Activated CD8-positive, alpha-beta memory T cell treated with anti-CD3 and anti-CD28 coated beads, Interleukin-2, amount 10 ng/mL, durations not matched to agents 7 days and 5 days (primary cell): ENCODE measurements at regions of chr20 and their contacts with region 1.

Region 1: DNA sequence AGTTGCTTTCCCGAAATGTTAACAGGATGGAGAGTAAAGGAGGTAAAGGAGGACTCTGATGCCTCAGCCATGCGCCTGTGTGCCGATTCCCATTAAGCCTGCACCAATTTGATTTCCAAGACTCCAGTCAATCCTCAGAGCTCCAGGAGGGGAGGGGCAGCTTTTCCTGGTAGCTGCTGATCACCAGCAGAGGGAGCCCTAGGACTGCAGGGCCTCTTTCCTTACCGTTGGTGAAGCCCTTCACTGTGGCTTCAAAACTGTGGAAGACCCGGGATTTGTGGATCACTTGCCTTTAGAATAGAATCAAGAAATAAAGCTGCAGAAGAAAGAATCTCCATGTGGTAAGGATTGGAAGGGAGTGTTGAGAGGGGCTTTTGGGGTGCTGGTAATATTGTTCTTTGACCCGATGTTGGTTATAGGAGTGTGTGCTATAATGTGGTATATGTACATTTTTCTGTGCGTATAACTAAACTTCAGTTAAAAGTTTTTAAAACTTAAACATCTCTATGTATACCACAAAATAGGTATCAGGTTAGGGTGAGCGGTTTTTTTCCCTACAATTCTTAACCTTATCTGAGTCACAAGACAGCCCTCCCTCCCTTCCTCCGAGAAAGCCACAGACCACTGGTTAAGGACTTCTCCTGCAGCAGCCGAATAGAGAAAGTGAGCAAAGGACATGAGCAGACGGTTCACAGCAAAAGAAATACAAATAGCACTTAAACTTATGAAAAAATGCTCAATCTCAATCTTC is 6.9 kb upstream of the OSER1 start:
- DNase-seq: peak; percentile 80
- ATAC-seq: peak; percentile 62
- H3K4me3 Mint-ChIP-seq: peak overlapping the region; percentile 60
- H3K27ac Mint-ChIP-seq: peak overlapping the region; percentile 76
- H3K4me1 Mint-ChIP-seq: peaks cover 40% of the 10 kb centered on the region
- H3K27me3 Mint-ChIP-seq: peaks cover 2% of the 10 kb centered on the region

Region 2: DNA sequence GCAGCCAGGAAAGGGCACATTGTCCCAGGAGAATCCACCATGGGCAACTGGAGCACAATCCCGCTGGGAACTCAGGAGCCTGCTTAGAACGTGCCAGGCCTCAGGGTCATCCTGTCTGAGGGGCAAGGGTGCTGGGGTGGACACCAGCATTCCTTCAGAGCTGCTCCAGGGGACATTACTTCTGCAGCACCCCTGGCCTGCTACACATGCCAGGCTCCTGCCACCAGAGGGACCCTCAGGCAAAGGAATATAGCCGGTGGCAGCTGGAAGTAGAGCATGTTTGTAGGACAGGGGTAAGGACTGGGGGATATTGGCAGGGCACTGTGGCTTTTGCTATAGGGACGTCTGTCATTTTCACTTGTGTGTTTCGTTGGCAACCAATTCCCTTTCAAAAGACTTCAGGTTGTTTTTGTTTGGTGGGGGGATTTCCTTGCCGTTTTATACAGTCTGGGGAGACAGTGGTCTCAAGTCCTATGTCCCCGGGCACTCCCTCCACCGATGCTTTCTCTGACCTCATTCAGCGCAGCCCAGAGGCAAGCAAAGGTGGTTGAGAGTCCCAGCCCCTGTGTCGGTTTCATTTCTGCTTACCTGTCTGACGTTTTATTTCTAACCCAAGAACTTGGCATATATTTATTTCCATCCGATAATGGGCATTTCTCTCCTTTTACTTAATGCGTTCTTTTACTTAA is 161.4 kb before region 1 on chr20:
- CTCF ChIA-PET with region 1: no interaction called
- DNase-seq: peak; percentile 63
- ATAC-seq: peak; percentile 66
- H3K4me3 Mint-ChIP-seq: no peak overlapping the region
- H3K27ac Mint-ChIP-seq: no peak overlapping the region
- H3K4me1 Mint-ChIP-seq: peaks cover 2% of the 10 kb centered on the region
- H3K27me3 Mint-ChIP-seq: peaks cover 59% of the 10 kb centered on the region

Region 3: DNA sequence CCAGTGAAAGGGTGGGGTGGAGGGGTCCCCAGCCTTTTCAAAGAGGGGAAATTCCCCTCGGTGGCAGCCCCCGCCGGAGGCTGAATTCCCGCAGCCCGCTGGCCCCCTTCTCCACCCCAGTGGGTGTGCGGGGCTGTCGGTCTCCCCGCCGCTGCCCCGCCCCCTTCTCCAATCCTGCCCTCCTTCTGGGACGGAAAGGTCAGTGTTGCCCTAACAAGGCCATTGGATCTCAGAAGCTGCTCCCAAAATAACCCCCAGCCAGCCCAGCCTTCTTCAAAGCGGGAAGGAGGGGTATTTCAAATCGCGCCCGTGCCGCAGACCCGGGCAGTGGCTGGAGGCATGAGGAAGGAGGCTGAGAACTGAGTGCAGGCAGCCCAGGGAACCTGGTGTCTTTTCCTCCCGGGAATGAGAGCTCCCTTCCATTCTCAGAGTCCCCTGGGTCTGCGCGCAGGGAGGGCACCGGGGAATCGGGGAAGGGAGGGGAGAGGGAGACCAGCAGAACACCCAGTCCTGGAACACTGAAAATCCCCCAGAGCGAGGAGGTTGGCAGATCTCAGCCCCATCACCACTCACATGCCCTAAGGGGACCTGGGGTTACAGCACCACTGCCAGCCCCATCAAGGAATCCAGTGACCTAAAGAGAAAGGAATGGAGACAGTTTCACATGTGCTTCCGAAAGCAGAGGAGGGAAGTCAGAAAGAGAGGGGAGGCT is 30.3 kb before region 1 on chr20 and contains the start of gene JPH2:
- CTCF ChIA-PET with region 1: interaction called, 11 read pairs
- DNase-seq: no peak
- ATAC-seq: peak; percentile 20
- H3K4me3 Mint-ChIP-seq: peak within 1 kb of the TSS; percentile 22
- H3K27ac Mint-ChIP-seq: no peak within 1 kb of the TSS
- H3K4me1 Mint-ChIP-seq: peaks cover 17% of the 10 kb centered on the region
- H3K27me3 Mint-ChIP-seq: peaks cover 62% of the 10 kb centered on the region
- total RNA-seq, gene JPH2: not detected

Region 4: DNA sequence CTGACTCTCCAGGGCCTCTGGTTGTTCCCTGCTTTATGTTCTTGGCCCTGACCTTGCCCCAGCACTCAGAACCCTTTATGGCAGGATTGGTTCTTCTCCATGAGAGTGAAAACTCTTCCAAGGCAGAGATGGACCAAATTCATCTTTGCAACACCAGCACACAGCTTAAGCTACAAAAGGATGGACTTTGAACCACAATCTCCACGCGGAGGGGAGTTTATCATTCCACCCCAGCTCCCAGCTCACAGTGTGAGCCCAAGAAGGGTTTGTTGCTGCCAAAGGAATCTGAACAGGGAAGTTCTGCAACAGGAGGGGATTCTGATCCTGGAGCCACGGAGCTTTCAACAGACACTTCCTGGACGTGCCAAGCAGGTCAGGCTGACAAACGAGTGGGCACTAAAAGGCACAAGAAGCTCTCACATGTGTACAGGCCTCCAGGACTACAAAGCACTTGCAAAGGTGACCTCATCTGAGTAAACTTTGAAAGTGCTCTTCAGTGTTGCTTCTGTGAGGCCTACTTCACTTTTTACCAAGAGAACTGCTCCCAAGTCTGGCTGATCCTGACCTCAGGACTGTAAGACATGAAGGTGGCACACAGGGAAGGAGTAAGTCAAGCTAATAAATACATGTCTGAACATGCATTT is 84.6 kb after region 1 on chr20:
- CTCF ChIA-PET with region 1: interaction called, 10 read pairs
- DNase-seq: no peak
- ATAC-seq: no peak
- H3K4me3 Mint-ChIP-seq: no peak overlapping the region
- H3K27ac Mint-ChIP-seq: no peak overlapping the region
- H3K4me1 Mint-ChIP-seq: no peaks in the 10 kb centered on the region
- H3K27me3 Mint-ChIP-seq: no peaks in the 10 kb centered on the region

Region 5: DNA sequence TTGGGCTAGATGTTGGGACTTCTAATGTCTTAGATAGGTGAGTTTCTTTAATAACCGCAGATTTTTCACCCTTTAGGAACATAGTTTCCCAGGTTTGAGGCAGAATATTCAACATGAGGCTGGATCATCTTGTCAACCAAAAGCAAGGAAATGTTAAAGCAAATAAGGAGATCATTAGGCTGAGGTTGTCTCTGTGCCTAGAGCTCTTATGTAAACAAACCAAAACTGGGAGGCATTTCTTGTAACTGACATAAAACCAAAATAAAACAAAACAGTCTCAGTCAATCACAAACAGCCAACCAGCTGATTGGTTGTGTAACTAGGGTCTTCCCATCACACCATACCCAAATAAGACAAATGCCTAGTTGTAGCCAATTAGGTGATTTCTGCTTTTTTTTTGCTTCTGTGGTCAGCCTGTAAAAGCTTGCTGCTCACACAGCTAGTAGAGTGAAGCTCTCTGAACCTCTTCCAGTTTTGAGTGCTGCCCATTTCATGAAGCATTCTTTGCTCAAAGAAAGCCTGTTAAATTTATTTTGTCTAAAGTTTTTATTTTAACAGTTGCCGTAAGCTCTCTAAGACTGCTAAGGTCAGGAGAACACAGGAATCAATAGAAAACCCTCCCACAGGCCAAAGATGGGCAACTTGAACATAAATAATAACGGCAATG is 102.4 kb after region 1 on chr20:
- CTCF ChIA-PET with region 1: interaction called, 386 read pairs
- DNase-seq: no peak
- ATAC-seq: no peak
- H3K4me3 Mint-ChIP-seq: no peak overlapping the region
- H3K27ac Mint-ChIP-seq: no peak overlapping the region
- H3K4me1 Mint-ChIP-seq: no peaks in the 10 kb centered on the region
- H3K27me3 Mint-ChIP-seq: peaks cover 11% of the 10 kb centered on the region

Region 6: DNA sequence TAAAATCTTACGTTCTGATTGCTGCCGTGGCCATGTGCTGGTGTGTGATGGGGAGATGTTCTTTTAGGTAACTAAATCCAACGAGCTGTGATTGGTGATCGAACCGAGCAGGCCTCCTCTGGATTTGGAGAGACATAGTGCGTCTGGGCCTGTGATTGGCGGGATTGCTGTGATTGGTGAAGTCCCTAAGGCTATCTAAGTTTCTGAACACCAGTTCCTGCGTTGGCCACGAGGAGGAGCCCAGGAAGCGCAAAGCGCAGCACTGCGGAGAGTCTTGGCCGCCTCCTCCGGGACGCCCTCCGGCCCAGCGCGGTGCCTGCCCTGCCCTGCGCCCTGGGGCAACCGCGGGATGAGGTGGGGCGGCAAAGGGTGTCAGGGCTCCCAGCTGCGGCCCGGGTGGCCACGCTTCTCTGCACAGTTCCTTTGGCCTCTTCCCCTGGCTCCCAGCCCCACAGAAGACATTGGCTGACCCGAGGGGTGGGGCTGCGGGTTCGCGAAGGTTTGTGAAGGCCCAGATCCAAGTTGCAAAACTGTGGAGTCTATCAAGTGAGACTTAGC is 171.0 kb after region 1 on chr20:
- CTCF ChIA-PET with region 1: interaction called, 116 read pairs
- DNase-seq: peak; percentile 82
- ATAC-seq: peak; percentile 92
- H3K4me3 Mint-ChIP-seq: no peak overlapping the region
- H3K27ac Mint-ChIP-seq: no peak overlapping the region
- H3K4me1 Mint-ChIP-seq: peaks cover 3% of the 10 kb centered on the region
- H3K27me3 Mint-ChIP-seq: peaks cover 16% of the 10 kb centered on the region

Region 7: DNA sequence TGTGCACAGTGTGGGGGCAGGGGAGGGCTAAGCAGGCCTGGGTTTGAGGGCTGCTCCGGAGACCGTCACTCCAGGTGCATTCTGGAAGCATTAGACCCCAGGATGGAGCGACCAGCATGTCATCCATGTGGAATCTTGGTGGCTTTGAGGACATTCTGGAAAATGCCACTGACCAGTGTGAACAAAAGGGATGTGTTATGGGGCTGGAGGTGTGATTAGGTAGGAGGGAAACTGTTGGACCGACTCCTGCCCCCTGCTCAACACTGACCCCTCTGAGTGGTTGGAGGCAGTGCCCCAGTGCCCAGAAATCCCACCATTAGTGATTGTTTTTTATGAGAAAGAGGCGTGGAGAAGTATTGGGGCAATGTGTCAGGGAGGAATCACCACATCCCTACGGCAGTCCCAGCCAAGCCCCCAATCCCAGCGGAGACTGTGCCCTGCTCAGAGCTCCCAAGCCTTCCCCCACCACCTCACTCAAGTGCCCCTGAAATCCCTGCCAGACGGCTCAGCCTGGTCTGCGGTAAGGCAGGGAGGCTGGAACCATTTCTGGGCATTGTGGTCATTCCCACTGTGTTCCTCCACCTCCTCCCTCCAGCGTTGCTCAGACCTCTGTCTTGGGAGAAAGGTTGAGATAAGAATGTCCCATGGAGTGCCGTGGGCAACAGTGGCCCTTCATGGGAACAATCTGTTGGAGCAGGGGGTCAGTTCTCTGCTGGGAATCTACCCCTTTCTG is 214.2 kb after region 1 on chr20:
- CTCF ChIA-PET with region 1: no interaction called
- DNase-seq: no peak
- ATAC-seq: no peak
- H3K4me3 Mint-ChIP-seq: no peak overlapping the region
- H3K27ac Mint-ChIP-seq: no peak overlapping the region
- H3K4me1 Mint-ChIP-seq: no peaks in the 10 kb centered on the region
- H3K27me3 Mint-ChIP-seq: peaks cover 8% of the 10 kb centered on the region